Mammary epithelial cell (primary cell): ENCODE measurements at regions of chr14 and their contacts with region 1.

Region 1: DNA sequence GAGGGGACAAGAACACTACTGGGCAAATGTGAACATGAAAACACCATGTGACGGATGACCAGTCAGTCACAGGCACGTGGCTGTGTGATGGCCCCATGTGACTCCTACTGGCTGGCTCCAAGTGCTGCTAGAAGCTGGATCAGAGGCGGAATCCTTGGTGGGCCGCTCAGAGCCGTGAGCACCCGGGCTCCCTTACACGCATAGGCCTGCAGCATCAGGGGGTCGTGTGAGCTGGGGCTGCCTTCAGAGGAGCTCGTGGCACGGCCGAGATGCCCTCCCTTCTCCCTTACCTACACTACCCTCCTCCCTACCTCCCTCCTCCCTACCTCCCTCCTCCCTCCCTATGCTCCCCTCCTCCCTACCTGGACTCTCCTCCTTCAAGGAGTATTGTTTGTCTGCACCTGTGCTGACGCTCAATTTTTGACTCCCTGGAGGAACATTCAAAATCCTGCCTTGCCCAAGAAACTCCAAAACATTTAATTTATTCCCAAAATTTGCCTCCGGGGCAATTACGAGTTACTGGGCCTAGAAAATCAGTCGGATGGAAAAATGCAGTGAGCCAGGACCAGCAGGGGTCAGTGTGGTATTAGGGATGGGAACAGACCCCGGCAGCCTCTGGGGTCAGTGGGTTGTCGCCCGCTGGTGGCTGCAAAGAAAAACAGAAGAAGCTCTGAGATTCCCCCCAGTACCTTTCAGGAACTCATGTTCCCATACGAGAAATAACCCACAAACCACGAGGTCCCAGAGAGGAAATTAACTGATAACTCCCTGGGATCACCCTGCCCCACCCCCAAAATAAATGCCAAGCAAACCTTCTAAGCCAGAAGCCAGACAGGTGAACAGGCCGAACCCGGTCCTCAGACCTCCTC is 61.2 kb downstream of the C14orf132 start:
- DNase-seq: peak; percentile 57
- H3K4me3 ChIP-seq: no peak overlapping the region
- H3K27ac ChIP-seq: no peak overlapping the region
- H3K4me1 ChIP-seq: peaks cover 16% of the 10 kb centered on the region
- H3K27me3 ChIP-seq: no peaks in the 10 kb centered on the region
- CTCF ChIP-seq: peak; percentile 75 to 94

Region 2: GRCh38 chr14:95993768-95994592 is 106.4 kb before region 1 on chr14:
- CTCF ChIA-PET with region 1: interaction called, 8 read pairs
- dilution Hi-C with region 1: no loop called
- in situ Hi-C with region 1: no loop called
- intact Hi-C with region 1: loop called (anchors 1 kb)
- DNase-seq: peak; percentile 11
- H3K4me3 ChIP-seq: no peak overlapping the region
- H3K27ac ChIP-seq: no peak overlapping the region
- H3K4me1 ChIP-seq: no peaks in the 10 kb centered on the region
- H3K27me3 ChIP-seq: no peaks in the 10 kb centered on the region
- CTCF ChIP-seq: peak; percentile 67 to 79

Region 3: DNA sequence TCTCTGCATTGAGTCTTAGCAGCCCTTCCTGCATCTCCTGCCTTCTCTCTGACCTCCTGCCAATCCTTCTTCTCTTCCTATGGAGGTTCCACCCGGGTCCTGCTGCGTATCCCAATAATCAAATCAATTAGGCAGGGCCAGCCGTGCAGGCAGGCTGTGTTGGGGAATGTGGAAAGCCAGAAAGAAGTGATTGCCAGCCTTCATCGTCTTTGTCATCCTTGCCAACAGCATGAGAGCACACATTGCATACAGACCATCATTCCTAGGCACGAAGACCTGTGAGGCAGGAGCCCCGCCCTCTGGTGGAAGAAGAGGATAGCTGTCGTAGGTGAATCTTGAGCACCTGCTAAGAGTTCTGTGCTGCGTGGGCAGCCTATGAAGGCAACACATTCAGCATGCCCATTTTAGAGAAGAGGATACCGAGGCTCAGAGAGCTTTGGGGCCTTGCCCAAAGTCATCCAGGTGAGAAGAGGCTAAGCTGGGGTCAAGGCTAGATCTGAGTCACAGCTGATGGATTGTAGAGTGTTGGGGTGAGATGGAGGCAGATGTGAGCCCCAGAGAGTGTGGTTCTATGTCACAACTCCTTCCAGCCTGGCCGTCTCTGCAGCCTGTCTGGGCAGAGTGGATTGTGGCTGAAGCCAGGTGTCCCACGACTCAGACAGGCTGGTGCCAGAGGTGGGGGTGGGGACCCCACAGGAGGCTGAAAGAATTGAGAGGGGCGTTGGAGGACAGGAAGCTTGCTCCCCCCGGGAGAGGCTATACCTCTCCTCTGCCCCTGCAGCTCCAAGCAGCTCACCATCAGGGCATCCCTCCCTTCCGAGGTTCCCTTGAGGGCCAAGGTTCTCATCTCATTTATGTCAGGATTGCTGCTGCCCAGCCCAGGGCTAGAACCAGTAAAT is 48.5 kb before region 1 on chr14:
- CTCF ChIA-PET with region 1: interaction called, 3 read pairs
- dilution Hi-C with region 1: loop called (anchors 5 kb)
- in situ Hi-C with region 1: loop called in 1 of 2 experiments (anchors 5 kb)
- intact Hi-C with region 1: loop called (anchors 1 kb)
- DNase-seq: peak; percentile 19
- H3K4me3 ChIP-seq: no peak overlapping the region
- H3K27ac ChIP-seq: no peak overlapping the region
- H3K4me1 ChIP-seq: no peaks in the 10 kb centered on the region
- H3K27me3 ChIP-seq: peaks cover 4% of the 10 kb centered on the region
- CTCF ChIP-seq: peak; percentile 31 to 34

Region 4: DNA sequence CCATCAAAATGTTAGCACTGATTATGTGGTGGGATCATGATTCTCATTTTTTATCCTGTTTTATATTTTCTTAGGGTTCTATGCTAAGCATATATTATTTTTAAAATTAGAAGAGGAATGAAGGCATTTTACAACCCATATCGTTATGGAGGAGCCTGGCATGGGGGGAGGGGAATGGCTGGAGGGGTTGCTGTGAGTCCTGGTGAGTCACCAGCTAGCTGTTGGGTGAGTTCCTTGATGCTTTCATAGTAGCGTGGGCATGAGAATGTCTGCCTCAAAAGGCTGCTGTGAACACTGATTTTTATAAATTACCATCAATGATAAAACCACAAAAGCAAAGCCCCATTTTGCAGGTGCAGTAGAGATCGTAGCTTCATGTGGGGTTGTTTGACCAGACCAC is 14.4 kb before region 1 on chr14:
- CTCF ChIA-PET with region 1: no interaction called
- dilution Hi-C with region 1: no loop called
- in situ Hi-C with region 1: no loop called
- intact Hi-C with region 1: no loop called
- DNase-seq: peak; percentile 73
- H3K4me3 ChIP-seq: no peak overlapping the region
- H3K27ac ChIP-seq: no peak overlapping the region
- H3K4me1 ChIP-seq: peaks cover 27% of the 10 kb centered on the region
- H3K27me3 ChIP-seq: peaks cover 7% of the 10 kb centered on the region
- CTCF ChIP-seq: no peak

Region 5: GRCh38 chr14:96167224-96168148 is 67.1 kb after region 1 on chr14:
- CTCF ChIA-PET with region 1: no interaction called
- dilution Hi-C with region 1: no loop called
- in situ Hi-C with region 1: no loop called
- intact Hi-C with region 1: no loop called
- DNase-seq: peak; percentile 75
- H3K4me3 ChIP-seq: no peak overlapping the region
- H3K27ac ChIP-seq: no peak overlapping the region
- H3K4me1 ChIP-seq: peaks cover 6% of the 10 kb centered on the region
- H3K27me3 ChIP-seq: no peaks in the 10 kb centered on the region
- CTCF ChIP-seq: no peak

Region 6: GRCh38 chr14:96225745-96226151 is 125.4 kb after region 1 on chr14:
- CTCF ChIA-PET with region 1: interaction called, 5 read pairs
- dilution Hi-C with region 1: no loop called
- in situ Hi-C with region 1: no loop called
- intact Hi-C with region 1: loop called (anchors 1 kb)
- DNase-seq: peak; percentile 54
- H3K4me3 ChIP-seq: no peak overlapping the region
- H3K27ac ChIP-seq: peak overlapping the region; percentile 71
- H3K4me1 ChIP-seq: peaks cover 31% of the 10 kb centered on the region
- H3K27me3 ChIP-seq: no peaks in the 10 kb centered on the region
- CTCF ChIP-seq: peak; percentile 29 to 50

Region 7: GRCh38 chr14:96275177-96276112 is 175.1 kb after region 1 on chr14:
- CTCF ChIA-PET with region 1: interaction called, 6 read pairs
- dilution Hi-C with region 1: loop called (anchors 25 kb)
- in situ Hi-C with region 1: loop called (anchors 5 kb)
- intact Hi-C with region 1: loop called (anchors 1 kb)
- DNase-seq: peak; percentile 29
- H3K4me3 ChIP-seq: no peak overlapping the region
- H3K27ac ChIP-seq: no peak overlapping the region
- H3K4me1 ChIP-seq: peaks cover 10% of the 10 kb centered on the region
- H3K27me3 ChIP-seq: no peaks in the 10 kb centered on the region
- CTCF ChIP-seq: peak; percentile 97 to 99

Region 8: DNA sequence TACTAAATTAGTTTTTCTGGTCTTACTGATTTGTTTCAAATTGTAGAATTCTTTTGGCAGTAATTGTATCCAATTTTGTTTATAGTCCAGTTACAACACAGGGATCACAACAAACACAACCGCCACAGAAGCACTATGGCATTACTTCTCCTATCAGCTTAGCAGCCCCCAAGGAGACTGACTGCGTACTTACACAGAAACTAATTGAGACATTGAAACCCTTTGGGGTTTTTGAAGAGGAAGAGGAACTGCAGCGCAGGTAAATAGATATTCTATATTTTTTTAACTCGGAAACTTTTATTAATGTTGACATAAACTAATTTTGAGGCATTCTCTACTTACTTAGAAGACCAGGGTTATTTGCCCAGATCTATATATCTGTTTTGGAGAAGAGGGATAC is 419.6 kb after region 1 on chr14:
- CTCF ChIA-PET with region 1: no interaction called
- dilution Hi-C with region 1: no loop called
- in situ Hi-C with region 1: no loop called
- intact Hi-C with region 1: no loop called
- DNase-seq: no peak
- H3K4me3 ChIP-seq: no peak overlapping the region
- H3K27ac ChIP-seq: no peak overlapping the region
- H3K4me1 ChIP-seq: no peaks in the 10 kb centered on the region
- H3K27me3 ChIP-seq: no peaks in the 10 kb centered on the region
- CTCF ChIP-seq: no peak